GM13976 (cell line): ENCODE measurements at regions of chr11 and their contacts with region 1.

Region 1: GRCh38 chr11:65354265-65355012 is at the start of gene TIGD3:
- DNase-seq: peak; percentile 100
- CTCF ChIP-seq: peak; percentile 9

Region 2: GRCh38 chr11:65506770-65507505 is 152.5 kb after region 1 on chr11:
- in situ Hi-C with region 1: loop called (anchors 5 kb)
- DNase-seq: no peak
- CTCF ChIP-seq: no peak